Lower leg skin (tissue), 4 donors: ENCODE measurements at regions of chr1 and their contacts with region 1.

Region 1: DNA sequence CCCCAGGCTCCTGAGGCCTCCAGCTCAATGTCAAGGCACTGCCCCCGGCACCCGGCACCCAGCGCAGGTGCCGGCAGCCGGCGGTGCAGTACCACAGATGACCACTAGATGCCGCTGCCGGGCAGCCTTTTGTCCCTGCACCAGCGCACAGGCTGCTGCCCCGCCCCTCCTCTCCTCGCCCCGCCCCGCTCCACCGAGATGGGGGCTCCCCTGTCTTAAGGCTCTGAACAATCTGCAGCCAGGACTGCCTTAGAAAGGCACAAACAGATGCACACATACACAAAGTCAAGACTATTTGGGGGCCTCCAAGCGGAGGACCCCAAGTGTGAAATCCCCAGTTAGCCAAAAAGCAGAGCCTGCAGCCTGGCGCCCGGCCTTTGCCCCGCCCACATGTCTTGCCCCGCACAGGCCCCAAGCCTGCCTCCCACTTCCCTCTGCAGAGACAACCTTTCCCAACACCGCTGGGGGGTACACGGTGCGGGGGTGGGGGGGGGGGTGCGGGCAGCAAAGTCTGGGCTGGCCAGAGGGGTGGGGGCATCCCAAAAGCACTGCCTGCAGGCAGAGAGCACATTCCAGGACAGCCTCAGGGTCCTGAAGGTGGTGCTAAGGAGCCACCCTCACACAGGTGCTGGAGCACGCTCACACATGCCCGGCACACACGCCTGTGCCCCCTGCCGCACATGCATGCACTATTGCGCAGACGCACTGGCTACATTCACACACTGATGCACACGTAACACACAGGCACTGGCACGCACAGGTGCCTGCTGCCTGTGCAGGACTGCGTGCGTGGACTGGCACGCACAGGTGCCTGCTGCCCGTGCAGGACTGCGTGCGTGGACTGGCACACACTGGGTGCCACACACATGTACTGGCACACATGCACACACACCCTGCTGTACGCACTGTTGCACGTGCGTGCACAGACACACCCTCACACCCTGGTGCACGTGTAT is 37.1 kb downstream of the ARHGEF16 start:
- DNase-seq: peak; percentile 53 to 95
- H3K4me3 ChIP-seq: no peak overlapping the region
- CTCF ChIP-seq: peak in 1 of 3 donors; percentile 65
- POLR2A ChIP-seq: no peak

Region 2: DNA sequence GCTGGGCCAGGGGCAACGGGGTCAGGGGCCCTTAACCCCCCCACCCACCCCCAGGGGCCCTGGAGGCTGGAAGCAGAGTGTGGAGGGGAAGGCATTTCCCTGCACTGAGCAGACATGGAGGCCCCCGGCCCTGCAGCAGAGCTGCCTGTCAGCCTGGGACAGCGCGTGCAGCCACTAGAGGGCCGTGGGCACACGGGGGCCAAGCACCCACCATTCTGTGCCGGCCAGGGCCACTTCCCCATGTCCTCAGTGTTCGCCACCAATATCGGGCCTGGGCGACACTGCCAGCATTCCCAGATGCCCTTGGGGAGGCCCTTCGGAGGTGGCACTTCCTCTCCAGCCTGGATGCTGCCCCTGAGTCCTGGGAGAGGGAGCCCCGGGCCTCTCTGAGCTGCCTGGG is 60.3 kb before region 1 on chr1:
- intact Hi-C with region 1: no loop called
- DNase-seq: no peak
- H3K4me3 ChIP-seq: no peak overlapping the region
- CTCF ChIP-seq: no peak
- POLR2A ChIP-seq: no peak

Region 3: GRCh38 chr1:3471302-3472087 is 20.1 kb before region 1 on chr1:
- intact Hi-C with region 1: no loop called
- DNase-seq: no peak
- H3K4me3 ChIP-seq: no peak overlapping the region
- CTCF ChIP-seq: no peak
- POLR2A ChIP-seq: no peak

Region 4: DNA sequence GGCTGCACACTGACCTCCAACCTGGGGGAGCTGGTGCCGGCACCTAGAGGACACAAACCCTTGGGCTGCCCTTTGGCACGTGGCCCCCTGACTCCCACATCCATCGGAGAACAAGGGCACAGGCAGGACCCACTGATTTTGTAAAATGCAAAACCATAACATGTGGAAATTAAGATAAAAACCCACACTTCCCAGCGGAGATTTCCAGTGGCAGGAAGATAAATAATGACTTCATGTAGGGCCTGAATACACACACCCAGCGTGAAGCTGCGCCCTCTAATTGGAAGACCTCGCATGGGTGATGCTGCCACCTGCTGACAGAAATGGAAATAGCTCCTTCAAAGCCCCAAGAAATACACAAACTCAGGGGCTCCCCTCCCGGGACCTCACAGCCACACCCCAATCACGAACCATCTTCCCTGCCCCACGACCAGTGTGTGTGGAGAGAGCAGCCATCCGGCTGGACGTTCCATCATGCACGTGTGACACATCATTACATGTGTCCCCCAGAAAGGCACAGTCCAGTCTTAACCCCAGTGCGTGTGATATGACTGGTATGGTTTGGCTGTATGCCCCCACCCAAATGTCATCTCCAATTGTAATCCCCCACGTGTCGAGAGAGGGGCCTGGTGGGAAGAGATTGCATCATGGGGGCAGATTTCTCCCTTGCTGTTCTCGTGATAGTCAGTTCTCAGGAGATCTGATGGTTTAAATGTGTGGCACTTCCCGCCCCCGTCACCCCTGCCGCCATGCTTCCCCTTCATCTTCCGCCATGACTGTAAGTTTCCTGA is 127.5 kb after region 1 on chr1:
- intact Hi-C with region 1: loop called (anchors 2 kb)
- DNase-seq: peak; percentile 81 to 93
- H3K4me3 ChIP-seq: no peak overlapping the region
- CTCF ChIP-seq: peak in 1 of 3 donors; percentile 86
- POLR2A ChIP-seq: no peak

Region 5: DNA sequence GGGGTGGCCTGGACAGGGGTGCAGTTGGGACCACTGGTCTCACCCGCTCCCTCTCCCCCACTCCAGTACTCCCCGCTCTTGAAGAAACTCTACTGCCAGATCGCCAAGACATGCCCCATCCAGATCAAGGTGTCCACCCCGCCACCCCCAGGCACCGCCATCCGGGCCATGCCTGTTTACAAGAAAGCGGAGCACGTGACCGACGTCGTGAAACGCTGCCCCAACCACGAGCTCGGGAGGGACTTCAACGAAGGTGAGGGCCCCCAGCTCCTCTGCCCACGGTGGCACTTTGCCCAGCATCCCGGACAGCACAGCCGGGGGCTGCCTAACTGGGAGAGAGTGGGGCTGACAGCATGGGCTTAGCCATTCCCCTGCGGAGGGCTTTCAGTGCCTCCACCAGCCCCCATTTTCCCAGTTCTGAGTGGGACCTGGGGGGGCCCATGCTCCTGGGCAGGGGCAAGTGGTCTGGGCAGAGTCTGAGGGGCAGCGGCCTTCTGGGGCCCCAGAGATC is 230.4 kb after region 1 on chr1:
- intact Hi-C with region 1: loop called (anchors 1 kb)
- DNase-seq: no peak
- H3K4me3 ChIP-seq: no peak overlapping the region
- CTCF ChIP-seq: no peak
- POLR2A ChIP-seq: no peak

Region 6: DNA sequence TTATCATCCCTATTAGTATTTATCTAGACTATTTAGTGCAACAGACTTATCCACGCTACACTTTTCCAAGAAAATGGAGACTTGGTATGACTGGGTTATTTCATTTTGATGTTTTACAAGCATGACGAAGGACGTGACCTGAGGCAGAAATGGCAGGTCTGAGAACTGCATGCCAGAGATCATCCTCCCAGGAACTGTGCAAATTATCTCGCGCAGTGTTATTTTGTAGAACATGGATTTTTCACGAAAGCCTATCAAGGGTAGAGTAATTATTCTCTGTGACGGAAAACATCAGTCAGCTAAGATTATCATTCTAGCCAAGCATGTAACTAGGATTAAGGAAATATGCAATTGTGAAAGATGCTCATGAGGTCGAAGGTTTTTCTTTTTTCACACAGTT is 801.3 kb after region 1 on chr1:
- intact Hi-C with region 1: no loop called
- DNase-seq: no peak
- H3K4me3 ChIP-seq: no peak overlapping the region
- CTCF ChIP-seq: no peak
- POLR2A ChIP-seq: no peak